HepG2 (cell line): ENCODE measurements at regions of chr18 and their contacts with region 1.

Region 1: DNA sequence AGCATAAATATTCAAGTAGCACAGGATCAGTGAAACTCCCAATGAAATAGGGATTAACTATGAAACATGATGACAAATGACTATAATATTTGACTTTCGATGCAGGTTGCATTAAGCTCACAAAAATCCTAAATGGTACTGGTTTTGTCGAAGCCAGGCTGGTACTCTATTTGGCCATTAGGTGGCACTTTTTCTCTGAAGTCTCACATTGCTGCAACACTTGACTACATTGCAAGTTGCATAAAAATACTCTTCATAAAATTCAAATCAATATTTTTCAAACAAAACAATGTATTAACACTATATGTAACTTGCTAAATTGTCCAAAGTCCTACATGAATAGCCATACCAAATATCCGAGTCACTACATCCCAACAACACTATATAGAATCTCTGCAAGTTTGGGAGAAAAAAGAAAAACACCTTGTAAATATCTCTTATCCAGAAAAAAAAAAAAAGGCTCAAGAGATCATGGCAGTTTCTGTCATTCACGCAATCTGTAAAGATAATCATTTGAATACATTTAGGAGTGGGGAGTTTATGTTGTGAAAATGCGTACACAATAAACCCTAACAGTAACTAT is 9.5 kb downstream of the RTTN start:
- DNase-seq: peak; percentile 35
- ATAC-seq: peak; percentile 63
- H3K4me3 ChIP-seq: no peak overlapping the region
- H3K27ac ChIP-seq: no peak overlapping the region
- H3K4me1 ChIP-seq: no peaks in the 10 kb centered on the region
- H3K27me3 ChIP-seq: no peaks in the 10 kb centered on the region
- CTCF ChIP-seq: peak; percentile 76
- EP300 ChIP-seq: no peak
- POLR2A ChIP-seq: no peak
- RAD21 ChIP-seq: peak; percentile 67

Region 2: GRCh38 chr18:70249118-70249517 is 53.2 kb after region 1 on chr18:
- CTCF ChIA-PET with region 1: no interaction called
- POLR2A ChIA-PET with region 1: no interaction called
- in situ Hi-C with region 1: no loop called
- intact Hi-C with region 1: no loop called
- DNase-seq: no peak
- ATAC-seq: no peak
- H3K4me3 ChIP-seq: no peak overlapping the region
- H3K27ac ChIP-seq: no peak overlapping the region
- H3K4me1 ChIP-seq: no peaks in the 10 kb centered on the region
- H3K27me3 ChIP-seq: no peaks in the 10 kb centered on the region
- CTCF ChIP-seq: no peak
- EP300 ChIP-seq: no peak
- POLR2A ChIP-seq: no peak
- RAD21 ChIP-seq: no peak

Region 3: GRCh38 chr18:70454704-70455322 is 258.9 kb after region 1 on chr18:
- CTCF ChIA-PET with region 1: interaction called, 32 read pairs
- POLR2A ChIA-PET with region 1: no interaction called
- in situ Hi-C with region 1: no loop called
- intact Hi-C with region 1: loop called (anchors 1 kb)
- DNase-seq: peak; percentile 60
- ATAC-seq: peak; percentile 47; the same call in 2 of the 3 replicates
- H3K4me3 ChIP-seq: no peak overlapping the region
- H3K27ac ChIP-seq: no peak overlapping the region
- H3K4me1 ChIP-seq: peaks cover 37% of the 10 kb centered on the region
- H3K27me3 ChIP-seq: no peaks in the 10 kb centered on the region
- CTCF ChIP-seq: peak; percentile 74
- EP300 ChIP-seq: no peak
- POLR2A ChIP-seq: no peak
- RAD21 ChIP-seq: peak; percentile 57; the same call in 1 of the 2 replicates